ENCODE measurements at regions of chr7 and their contacts with region 1.

Region 1: DNA sequence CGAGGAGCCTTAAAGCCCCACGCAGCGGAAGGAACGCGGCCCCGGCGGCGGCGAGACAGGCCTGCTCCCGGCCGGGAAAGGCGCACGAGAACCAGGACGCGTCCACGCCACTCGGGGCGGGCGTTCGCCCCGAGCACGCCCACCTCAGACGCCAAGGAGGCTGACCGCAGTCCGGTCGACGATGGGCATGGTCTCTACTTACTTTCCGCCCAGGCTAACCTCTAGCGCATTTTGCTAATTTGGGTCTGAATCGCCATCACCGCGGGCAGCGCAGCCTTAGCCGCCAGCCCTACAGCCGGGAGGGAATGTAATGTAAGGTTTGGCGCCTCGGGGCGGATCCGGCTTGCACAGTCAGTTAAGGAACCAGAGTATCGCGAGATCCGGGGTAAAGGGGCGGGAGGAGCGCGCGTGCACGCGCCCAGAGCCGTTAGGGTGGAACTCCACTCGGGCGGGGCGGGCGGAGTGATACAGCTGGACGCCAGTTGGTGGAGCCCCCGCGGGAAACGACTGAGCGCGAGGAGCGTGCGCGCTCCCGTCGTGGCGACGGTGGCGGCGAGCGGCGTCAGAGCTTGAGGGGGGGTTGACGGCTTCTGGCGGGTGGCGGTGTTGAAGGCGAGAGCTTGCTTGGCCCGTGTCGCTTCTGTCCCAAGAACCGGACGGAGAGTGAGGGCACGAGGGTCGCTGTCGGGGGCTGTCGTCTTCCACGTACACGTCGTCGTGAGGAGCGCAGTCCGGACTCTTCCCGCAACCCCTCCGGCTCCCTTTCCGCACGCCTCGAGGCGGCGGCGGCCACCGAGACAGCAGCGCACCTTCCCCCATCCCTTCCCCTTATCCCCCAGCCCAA is at the start of gene LUC7L2:
- DNase-seq: peak; percentile 98 to 100 (median 99)
- H3K4me3 ChIP-seq: peak within 1 kb of the TSS; percentile 92
- H3K4me3 Mint-ChIP-seq: peak within 1 kb of the TSS; percentile 97 to 99 (median 98)
- H3K27ac ChIP-seq: peak within 1 kb of the TSS; percentile 98
- H3K27ac Mint-ChIP-seq: peak within 1 kb of the TSS; percentile 97 to 100 (median 99)
- H3K4me1 ChIP-seq: peaks cover 30% of the 10 kb centered on the region
- H3K4me1 Mint-ChIP-seq: peaks cover 44 to 60% (median 55%) of the 10 kb centered on the region in 3 donors
- H3K27me3 ChIP-seq: no peaks in the 10 kb centered on the region
- H3K27me3 Mint-ChIP-seq: no peaks in the 10 kb centered on the region
- total RNA-seq, gene LUC7L2: 150 to 164 TPM

Region 2: GRCh38 chr7:139177696-139178095 is 181.9 kb before region 1 on chr7:
- CTCF ChIA-PET with region 1: no interaction called
- POLR2A ChIA-PET with region 1: no interaction called
- DNase-seq: no peak
- H3K4me3 ChIP-seq: no peak overlapping the region
- H3K4me3 Mint-ChIP-seq: no peak overlapping the region
- H3K27ac ChIP-seq: no peak overlapping the region
- H3K27ac Mint-ChIP-seq: no peak overlapping the region
- H3K4me1 ChIP-seq: no peaks in the 10 kb centered on the region
- H3K4me1 Mint-ChIP-seq: no peaks in the 10 kb centered on the region
- H3K27me3 ChIP-seq: no peaks in the 10 kb centered on the region
- H3K27me3 Mint-ChIP-seq: no peaks in the 10 kb centered on the region

Region 3: GRCh38 chr7:139230774-139231512 is 128.6 kb before region 1 on chr7 and contains the start of gene UBN2:
- CTCF ChIA-PET with region 1: no interaction called
- POLR2A ChIA-PET with region 1: interaction called, 10 read pairs
- DNase-seq: peak; percentile 79 to 92 (median 84)
- H3K4me3 ChIP-seq: peak within 1 kb of the TSS; percentile 94
- H3K4me3 Mint-ChIP-seq: peak within 1 kb of the TSS; percentile 97 to 100 (median 99)
- H3K27ac ChIP-seq: peak within 1 kb of the TSS; percentile 86
- H3K27ac Mint-ChIP-seq: peak within 1 kb of the TSS; percentile 88 to 100 (median 98)
- H3K4me1 ChIP-seq: peaks cover 15% of the 10 kb centered on the region
- H3K4me1 Mint-ChIP-seq: peaks cover 30 to 43% (median 40%) of the 10 kb centered on the region in 3 donors
- H3K27me3 ChIP-seq: no peaks in the 10 kb centered on the region
- H3K27me3 Mint-ChIP-seq: peaks cover 6 to 8% of the 10 kb centered on the region in 2 donors
- total RNA-seq, gene UBN2: 13.0 to 13.6 TPM

Region 4: GRCh38 chr7:139321071-139321745 is 38.4 kb before region 1 on chr7:
- CTCF ChIA-PET with region 1: no interaction called
- POLR2A ChIA-PET with region 1: no interaction called
- DNase-seq: no peak
- H3K4me3 ChIP-seq: no peak overlapping the region
- H3K4me3 Mint-ChIP-seq: no peak overlapping the region
- H3K27ac ChIP-seq: no peak overlapping the region
- H3K27ac Mint-ChIP-seq: no peak overlapping the region
- H3K4me1 ChIP-seq: no peaks in the 10 kb centered on the region
- H3K4me1 Mint-ChIP-seq: no peaks in the 10 kb centered on the region
- H3K27me3 ChIP-seq: no peaks in the 10 kb centered on the region
- H3K27me3 Mint-ChIP-seq: no peaks in the 10 kb centered on the region

Region 5: GRCh38 chr7:139340037-139340807 is 19.4 kb before region 1 on chr7:
- CTCF ChIA-PET with region 1: interaction called, 9 read pairs
- POLR2A ChIA-PET with region 1: interaction called, 67 read pairs
- DNase-seq: peak; percentile 93 to 100 (median 98)
- H3K4me3 ChIP-seq: peak overlapping the region; percentile 97
- H3K4me3 Mint-ChIP-seq: peak overlapping the region; percentile 91 to 100 (median 98)
- H3K27ac ChIP-seq: peak overlapping the region; percentile 100
- H3K27ac Mint-ChIP-seq: peak overlapping the region; percentile 99 to 100 (median 100)
- H3K4me1 ChIP-seq: peaks cover 24% of the 10 kb centered on the region
- H3K4me1 Mint-ChIP-seq: peaks cover 25 to 43% (median 41%) of the 10 kb centered on the region in 3 donors
- H3K27me3 ChIP-seq: no peaks in the 10 kb centered on the region
- H3K27me3 Mint-ChIP-seq: peaks cover 5 to 16% of the 10 kb centered on the region in 2 donors

Measured in CD8-positive, alpha-beta memory T cell (primary cell).